ENCODE measurements at regions of chr19 and their contacts with region 1.

Region 1: DNA sequence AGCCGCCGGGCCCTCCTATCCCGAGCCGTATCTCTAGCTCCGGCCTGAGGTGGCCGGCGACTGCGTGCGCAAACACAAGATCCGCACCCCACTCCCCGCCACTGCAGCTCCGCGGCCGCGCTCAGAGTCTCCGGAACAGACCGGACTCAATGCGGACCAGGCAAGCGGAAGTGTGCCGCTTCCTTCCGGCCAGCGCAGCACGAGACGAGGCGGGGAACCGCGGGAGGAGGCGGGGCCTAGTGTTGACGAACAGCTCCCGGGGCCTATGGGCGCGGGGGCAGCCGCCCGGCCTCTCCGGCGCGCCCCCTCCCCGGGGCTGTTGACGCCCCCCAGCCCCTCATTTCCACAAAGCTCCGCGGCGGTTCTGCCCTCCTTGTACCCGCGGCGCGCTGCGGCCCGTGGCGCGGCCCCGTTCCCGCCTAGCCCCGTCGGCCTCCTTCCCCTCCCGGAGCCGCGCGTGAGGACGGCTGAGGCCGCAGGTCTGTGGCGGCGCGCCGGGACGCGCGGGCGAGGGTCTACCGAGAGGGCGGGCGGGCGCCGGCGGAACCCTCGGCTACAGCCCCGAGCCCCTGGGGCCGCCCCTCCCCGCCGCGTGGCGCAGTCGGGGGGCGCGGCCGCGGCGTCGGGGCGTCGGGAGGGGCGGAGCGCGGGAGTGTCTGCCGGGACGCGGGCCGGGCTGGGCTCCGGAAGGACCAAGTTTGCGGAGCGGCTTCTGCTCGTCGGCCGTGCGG is at the start of gene DPY19L3:
- DNase-seq: peak; percentile 74 to 96 (median 82)
- ATAC-seq: peak; percentile 95
- H3K4me3 ChIP-seq: peak within 1 kb of the TSS; percentile 85
- H3K4me3 Mint-ChIP-seq: peak within 1 kb of the TSS; percentile 83 to 93 (median 88)
- H3K27ac ChIP-seq: peak within 1 kb of the TSS; percentile 90
- H3K27ac Mint-ChIP-seq: peak within 1 kb of the TSS; percentile 86 to 91 (median 89)
- H3K4me1 ChIP-seq: peaks cover 4 to 12% of the 10 kb centered on the region in 2 donors
- H3K4me1 Mint-ChIP-seq: peaks cover 8 to 34% (median 17%) of the 10 kb centered on the region in 7 donors
- H3K27me3 ChIP-seq: no peaks in the 10 kb centered on the region
- H3K27me3 Mint-ChIP-seq: no peaks in the 10 kb centered on the region
- total RNA-seq, gene DPY19L3: 8.4 to 19.3 (median 15.8) TPM

Region 2: DNA sequence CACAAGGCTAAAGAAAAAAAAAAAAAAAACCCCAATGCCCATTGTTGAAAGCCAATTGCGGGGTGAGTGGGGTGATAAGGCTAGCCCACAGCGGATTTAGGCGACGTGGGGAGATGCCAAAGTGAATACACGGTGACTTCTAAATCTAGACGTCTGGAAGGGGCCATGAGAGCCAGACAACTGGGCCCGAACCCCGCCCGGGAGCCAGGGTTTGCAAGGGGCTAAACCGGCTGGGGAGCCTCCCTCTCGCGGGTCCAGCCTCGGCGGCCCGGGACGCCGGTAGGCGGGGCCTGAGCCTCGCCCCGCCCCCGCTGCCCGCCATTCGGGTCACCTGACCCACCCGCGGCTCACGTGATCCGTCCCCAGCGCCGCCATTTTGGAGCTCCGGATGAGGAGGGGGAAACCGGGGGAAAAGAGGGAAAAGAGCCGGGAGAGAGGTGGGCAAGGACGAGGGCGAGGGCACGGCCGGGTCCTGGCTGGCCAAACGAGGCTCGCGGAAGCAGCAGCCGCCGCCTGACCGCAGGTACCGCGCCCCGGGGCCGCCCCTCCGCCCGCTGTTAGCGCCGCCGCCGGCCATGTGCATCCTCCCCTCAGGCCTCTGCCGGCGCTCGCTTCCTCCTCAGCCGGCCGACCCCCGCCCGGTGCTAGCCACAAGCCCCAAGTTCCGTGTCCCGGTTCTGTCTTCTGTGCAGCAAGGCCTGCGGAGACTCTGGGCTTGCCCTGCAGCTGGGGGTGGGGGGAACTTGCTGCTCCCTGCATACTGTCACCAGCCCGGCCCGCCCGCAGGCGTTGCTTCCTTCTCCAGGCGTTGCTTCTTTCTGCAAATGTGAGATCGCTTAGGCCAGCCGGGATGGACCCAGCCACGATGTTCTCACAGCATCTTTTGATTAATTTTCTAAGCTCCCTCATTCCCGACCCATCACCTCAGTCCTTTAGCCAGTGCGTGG is 60.1 kb before region 1 on chr19 and contains the start of gene ZNF507:
- CTCF ChIA-PET with region 1: no interaction called
- POLR2A ChIA-PET with region 1: interaction called, 13 read pairs
- intact Hi-C with region 1: loop called (anchors 1 kb)
- DNase-seq: peak; percentile 69 to 90 (median 77)
- ATAC-seq: peak; percentile 93
- H3K4me3 ChIP-seq: peak within 1 kb of the TSS; percentile 71
- H3K4me3 Mint-ChIP-seq: peak within 1 kb of the TSS; percentile 95 to 99 (median 97)
- H3K27ac ChIP-seq: peak within 1 kb of the TSS; percentile 89
- H3K27ac Mint-ChIP-seq: peak within 1 kb of the TSS; percentile 88 to 99 (median 95)
- H3K4me1 ChIP-seq: peaks cover 27 to 30% of the 10 kb centered on the region in 2 donors
- H3K4me1 Mint-ChIP-seq: peaks cover 30 to 47% (median 43%) of the 10 kb centered on the region in 7 donors
- H3K27me3 ChIP-seq: no peaks in the 10 kb centered on the region
- H3K27me3 Mint-ChIP-seq: peaks cover 0 to 18% (median 5%) of the 10 kb centered on the region in 5 donors
- total RNA-seq, gene ZNF507: 21.6 to 46.3 (median 36.4) TPM

Region 3: DNA sequence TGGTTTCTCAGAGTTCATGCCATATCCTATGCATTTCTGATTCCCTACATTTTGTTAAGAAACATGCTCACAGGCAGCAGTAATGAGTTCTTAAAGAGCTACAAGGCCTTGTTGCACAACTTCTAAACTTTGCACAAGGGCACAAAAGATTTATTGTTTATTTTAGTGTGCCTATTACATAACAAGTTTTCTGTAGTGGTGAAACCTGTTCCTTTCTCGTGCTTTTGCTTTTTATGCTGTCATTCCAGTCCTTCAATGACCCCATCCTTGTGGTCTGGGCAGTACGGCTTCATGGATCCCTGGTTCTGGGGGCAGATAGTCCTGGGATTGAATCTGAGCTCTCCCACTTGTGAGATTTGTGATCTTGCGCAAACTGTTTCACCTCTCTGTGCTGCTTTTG is 42.4 kb before region 1 on chr19:
- CTCF ChIA-PET with region 1: no interaction called
- POLR2A ChIA-PET with region 1: no interaction called
- intact Hi-C with region 1: loop called in 1 of 2 experiments (anchors 5 kb)
- DNase-seq: no peak
- ATAC-seq: no peak
- H3K4me3 ChIP-seq: no peak overlapping the region
- H3K4me3 Mint-ChIP-seq: peak overlapping the region in 1 of 10 donors; percentile 12
- H3K27ac ChIP-seq: no peak overlapping the region
- H3K27ac Mint-ChIP-seq: peak overlapping the region in 1 of 9 donors; percentile 8
- H3K4me1 ChIP-seq: no peaks in the 10 kb centered on the region
- H3K4me1 Mint-ChIP-seq: peaks cover 13 to 91% (median 76%) of the 10 kb centered on the region in 7 donors
- H3K27me3 ChIP-seq: no peaks in the 10 kb centered on the region
- H3K27me3 Mint-ChIP-seq: peaks cover 0 to 3% (median 0%) of the 10 kb centered on the region in 5 donors

Region 4: DNA sequence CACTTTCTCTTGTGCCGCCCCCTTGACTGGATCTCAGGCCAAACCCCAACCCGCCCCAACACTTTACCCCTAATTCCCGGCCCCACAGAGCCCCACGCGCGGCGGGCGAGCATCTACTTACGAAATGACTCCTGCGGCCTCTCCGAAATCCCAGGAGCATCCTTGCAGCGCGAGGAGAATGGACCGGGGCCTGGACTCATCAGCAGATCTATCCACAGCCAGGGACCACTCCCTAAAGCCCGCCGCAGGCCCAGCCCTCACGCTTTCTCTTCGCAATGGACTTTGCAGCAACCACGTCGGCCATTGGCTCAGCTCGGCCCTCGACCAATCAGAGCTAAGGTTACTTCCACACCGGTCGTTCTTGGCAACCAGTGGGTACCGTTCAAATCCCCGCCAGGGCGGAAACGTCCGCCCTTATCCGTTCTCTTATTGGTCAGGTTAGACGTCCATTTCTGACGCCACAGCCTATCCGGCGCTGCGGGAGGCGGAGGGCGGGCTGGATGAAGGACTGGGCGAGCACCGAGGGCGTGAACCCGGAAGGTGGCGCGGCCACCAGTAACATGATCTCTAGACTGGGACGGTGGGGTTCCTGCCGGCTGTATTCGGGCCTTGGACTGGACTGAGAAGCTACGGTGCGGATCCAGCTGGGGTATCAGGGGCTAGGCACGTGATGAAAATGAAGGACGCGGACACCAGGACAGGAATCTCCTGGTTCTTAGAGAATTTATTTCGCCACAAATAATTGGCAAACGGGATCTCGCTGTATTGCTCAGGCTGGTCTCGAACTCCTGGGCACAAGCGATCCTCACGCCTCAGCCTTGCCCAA is 566.3 kb after region 1 on chr19 and contains the starts of genes CEP89 and FAAP24:
- CTCF ChIA-PET with region 1: no interaction called
- POLR2A ChIA-PET with region 1: no interaction called
- intact Hi-C with region 1: loop called in 1 of 2 experiments (anchors 5 kb)
- DNase-seq: peak; percentile 89 to 99 (median 98)
- ATAC-seq: peak; percentile 98
- H3K4me3 ChIP-seq: peak within 1 kb of the TSS; percentile 78
- H3K4me3 Mint-ChIP-seq: peak within 1 kb of the TSS; percentile 96 to 100 (median 99)
- H3K27ac ChIP-seq: peak within 1 kb of the TSS; percentile 75
- H3K27ac Mint-ChIP-seq: peak within 1 kb of the TSS; percentile 92 to 97 (median 97)
- H3K4me1 ChIP-seq: peaks cover 0 to 5% of the 10 kb centered on the region in 2 donors
- H3K4me1 Mint-ChIP-seq: peaks cover 14 to 27% (median 20%) of the 10 kb centered on the region in 7 donors
- H3K27me3 ChIP-seq: no peaks in the 10 kb centered on the region
- H3K27me3 Mint-ChIP-seq: no peaks in the 10 kb centered on the region
- total RNA-seq, gene CEP89: 7.4 to 22.4 (median 20.1) TPM
- total RNA-seq, gene FAAP24: 0.71 to 7.2 (median 2.5) TPM

Region 5: GRCh38 chr19:33080761-33081681 is 675.4 kb after region 1 on chr19 and contains the start of gene GPATCH1:
- CTCF ChIA-PET with region 1: no interaction called
- POLR2A ChIA-PET with region 1: no interaction called
- intact Hi-C with region 1: loop called in 1 of 2 experiments (anchors 10 kb)
- DNase-seq: peak; percentile 79 to 92 (median 85)
- ATAC-seq: peak; percentile 99
- H3K4me3 ChIP-seq: peak within 1 kb of the TSS; percentile 98
- H3K4me3 Mint-ChIP-seq: peak within 1 kb of the TSS; percentile 92 to 99 (median 94)
- H3K27ac ChIP-seq: peak within 1 kb of the TSS; percentile 84
- H3K27ac Mint-ChIP-seq: peak within 1 kb of the TSS; percentile 89 to 99 (median 94)
- H3K4me1 ChIP-seq: peaks cover 10 to 11% of the 10 kb centered on the region in 2 donors
- H3K4me1 Mint-ChIP-seq: peaks cover 20 to 39% (median 30%) of the 10 kb centered on the region in 7 donors
- H3K27me3 ChIP-seq: no peaks in the 10 kb centered on the region
- H3K27me3 Mint-ChIP-seq: no peaks in the 10 kb centered on the region
- total RNA-seq, gene GPATCH1: 11.2 to 20.0 (median 14.4) TPM

Region 6: GRCh38 chr19:33521480-33522370 is 1116.1 kb after region 1 on chr19 and contains the start of gene PEPD:
- CTCF ChIA-PET with region 1: no interaction called
- POLR2A ChIA-PET with region 1: no interaction called
- intact Hi-C with region 1: loop called in 1 of 2 experiments (anchors 2 kb)
- DNase-seq: peak; percentile 53 to 82 (median 62)
- ATAC-seq: peak; percentile 95
- H3K4me3 ChIP-seq: peak within 1 kb of the TSS; percentile 82
- H3K4me3 Mint-ChIP-seq: peak within 1 kb of the TSS; percentile 75 to 91 (median 88)
- H3K27ac ChIP-seq: peak within 1 kb of the TSS; percentile 65
- H3K27ac Mint-ChIP-seq: peak within 1 kb of the TSS; percentile 69 to 95 (median 83)
- H3K4me1 ChIP-seq: peaks cover 13 to 14% of the 10 kb centered on the region in 2 donors
- H3K4me1 Mint-ChIP-seq: peaks cover 17 to 29% (median 25%) of the 10 kb centered on the region in 7 donors
- H3K27me3 ChIP-seq: no peaks in the 10 kb centered on the region
- H3K27me3 Mint-ChIP-seq: peaks cover 0 to 10% (median 0%) of the 10 kb centered on the region in 5 donors
- total RNA-seq, gene PEPD: 21.9 to 35.6 (median 24.5) TPM